ENCODE measurements at regions of chr12 and their contacts with region 1.

Region 1: DNA sequence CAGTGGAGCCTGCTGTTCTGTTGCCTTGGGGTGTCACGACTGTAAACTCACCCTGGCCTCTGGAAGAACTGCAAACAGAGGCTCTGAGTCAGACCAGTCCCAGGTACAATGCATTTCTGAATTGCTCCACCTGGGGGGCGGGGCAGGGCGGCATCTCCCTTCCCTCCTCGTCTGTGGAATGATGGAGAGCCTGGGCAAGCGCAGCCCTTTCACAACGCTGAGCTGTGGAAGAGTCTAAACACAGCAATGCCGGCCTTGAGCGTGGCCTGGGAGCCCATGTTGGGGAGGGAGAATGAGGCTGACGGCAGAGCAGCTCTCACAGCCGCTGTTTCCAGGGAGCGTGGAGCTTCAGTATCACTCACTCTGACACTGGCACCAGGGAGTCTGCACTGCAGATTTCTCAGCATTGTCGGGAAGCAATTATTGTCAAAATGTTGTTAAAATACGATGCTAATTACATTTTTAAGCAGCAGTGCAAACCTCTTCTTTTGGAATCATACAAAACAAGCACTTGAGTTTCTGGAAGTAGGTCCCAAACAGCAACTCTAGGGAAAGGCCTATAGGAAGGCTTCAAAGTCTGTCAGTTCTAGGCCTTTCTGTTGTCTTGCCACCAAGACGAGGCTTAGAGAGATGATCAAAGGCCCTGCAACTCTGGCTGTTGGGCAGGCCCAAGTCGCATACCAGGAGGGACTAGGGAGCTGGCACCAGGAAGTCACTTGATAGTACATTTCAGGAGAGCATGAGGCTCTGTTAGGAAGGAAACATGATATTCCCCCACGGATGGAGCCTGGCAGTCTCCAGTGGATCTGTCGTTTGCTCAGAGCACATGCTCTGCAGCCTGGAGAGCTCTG is 244.0 kb upstream of the FKBP4 start:
- DNase-seq: no peak
- H3K4me3 ChIP-seq: no peak overlapping the region
- H3K27ac ChIP-seq: peak overlapping the region in 1 of 4 donors; percentile 30
- H3K4me1 ChIP-seq: no peaks in the 10 kb centered on the region
- H3K27me3 ChIP-seq: no peaks in the 10 kb centered on the region
- CTCF ChIP-seq: no peak
- EP300 ChIP-seq: no peak
- POLR2A ChIP-seq: no peak

Region 2: DNA sequence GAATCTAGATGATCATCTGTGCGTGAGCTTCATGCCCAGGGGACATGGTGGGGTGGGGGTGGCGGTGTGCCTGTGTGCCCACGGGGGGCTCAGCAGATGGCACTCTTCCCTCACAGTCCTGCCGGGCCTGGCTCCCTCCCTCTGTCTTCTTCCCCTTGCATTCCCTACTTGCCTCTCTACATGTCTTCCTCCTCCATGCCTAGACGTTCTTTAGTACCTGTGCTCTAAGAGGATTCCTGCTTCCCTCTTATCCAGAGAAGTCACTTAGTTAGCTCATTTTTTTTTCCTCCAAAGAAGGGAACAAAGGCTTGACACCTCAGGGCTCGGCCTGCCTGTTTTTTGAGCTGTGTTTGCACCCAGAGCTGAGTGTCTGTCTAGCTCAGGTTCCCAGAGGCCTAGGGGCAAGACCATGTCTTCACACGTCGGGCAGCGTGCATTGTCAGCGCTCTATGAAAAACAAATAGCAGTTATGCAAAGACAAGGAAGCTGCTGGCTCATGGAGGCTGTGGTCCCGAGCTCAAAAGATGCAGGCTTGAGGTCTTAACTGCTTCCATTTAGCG is 1936.3 kb before region 1 on chr12:
- in situ Hi-C with region 1: no loop called
- intact Hi-C with region 1: loop called (anchors 5 kb)
- DNase-seq: peak; percentile 21
- H3K4me3 ChIP-seq: no peak overlapping the region
- H3K27ac ChIP-seq: no peak overlapping the region
- H3K4me1 ChIP-seq: no peaks in the 10 kb centered on the region
- H3K27me3 ChIP-seq: no peaks in the 10 kb centered on the region
- CTCF ChIP-seq: no peak
- EP300 ChIP-seq: no peak
- POLR2A ChIP-seq: no peak

Region 3: GRCh38 chr12:2137711-2138693 is 412.8 kb before region 1 on chr12:
- in situ Hi-C with region 1: no loop called
- intact Hi-C with region 1: loop called (anchors 10 kb)
- DNase-seq: peak; percentile 62
- H3K4me3 ChIP-seq: no peak overlapping the region
- H3K27ac ChIP-seq: peak overlapping the region; percentile 71 to 82 (median 77)
- H3K4me1 ChIP-seq: peaks cover 12 to 42% (median 34%) of the 10 kb centered on the region in 4 donors
- H3K27me3 ChIP-seq: no peaks in the 10 kb centered on the region
- CTCF ChIP-seq: no peak
- EP300 ChIP-seq: no peak
- POLR2A ChIP-seq: no peak

Region 4: GRCh38 chr12:2682296-2683251 is 131.8 kb after region 1 on chr12:
- in situ Hi-C with region 1: no loop called
- intact Hi-C with region 1: no loop called
- DNase-seq: peak; percentile 31
- H3K4me3 ChIP-seq: no peak overlapping the region
- H3K27ac ChIP-seq: peak overlapping the region in 1 of 4 donors; percentile 24
- H3K4me1 ChIP-seq: peaks cover 6 to 10% (median 8%) of the 10 kb centered on the region in 4 donors
- H3K27me3 ChIP-seq: no peaks in the 10 kb centered on the region
- CTCF ChIP-seq: peak; percentile 36 to 52 (median 49)
- EP300 ChIP-seq: no peak
- POLR2A ChIP-seq: no peak

Region 5: GRCh38 chr12:3004655-3005565 is 454.1 kb after region 1 on chr12:
- in situ Hi-C with region 1: no loop called
- intact Hi-C with region 1: no loop called
- DNase-seq: no peak
- H3K4me3 ChIP-seq: no peak overlapping the region
- H3K27ac ChIP-seq: peak overlapping the region in 1 of 4 donors; percentile 30
- H3K4me1 ChIP-seq: no peaks in the 10 kb centered on the region
- H3K27me3 ChIP-seq: no peaks in the 10 kb centered on the region
- CTCF ChIP-seq: peak in 1 of 5 experiments; percentile 15
- EP300 ChIP-seq: no peak
- POLR2A ChIP-seq: no peak